Testis (tissue), 5 donors: ENCODE measurements at regions of chr7 and their contacts with region 1.

Region 1: DNA sequence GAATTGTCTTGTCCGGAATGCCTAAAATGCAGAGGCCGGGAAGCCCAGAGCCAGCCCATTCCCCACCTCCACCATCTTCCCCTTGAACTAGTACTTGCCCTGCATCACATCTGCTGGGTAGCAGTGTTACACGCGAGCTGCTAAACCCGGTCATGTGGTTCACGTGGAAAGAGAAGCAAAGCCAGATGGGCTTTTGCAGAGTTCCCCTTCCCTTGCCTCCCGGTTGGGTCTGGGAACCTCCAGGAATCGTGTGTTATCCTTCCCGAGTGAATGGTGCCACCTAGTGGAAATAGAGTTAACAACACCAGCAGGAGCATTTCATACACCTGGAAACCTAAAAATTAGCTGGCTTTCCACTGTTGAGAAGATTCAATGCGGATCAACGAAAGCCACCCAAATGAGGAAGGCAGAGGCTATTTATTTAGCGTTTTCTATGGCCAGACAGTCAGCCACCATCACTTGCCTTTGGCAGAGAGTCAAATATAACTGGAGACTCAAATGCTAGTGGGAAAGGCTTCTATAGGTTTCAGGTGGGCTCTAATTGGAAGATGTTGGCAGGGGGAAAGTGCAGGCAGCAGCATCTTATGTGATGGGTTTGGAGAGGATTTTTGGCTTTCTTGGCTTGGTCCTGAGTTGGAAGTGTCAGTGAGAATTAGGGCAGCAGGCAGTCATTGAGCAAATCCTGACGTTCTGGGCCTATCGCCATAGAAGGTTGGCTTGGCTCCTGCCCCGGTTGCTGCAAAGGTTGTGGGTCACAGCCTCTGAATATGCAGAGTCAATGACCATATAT is 12.9 kb upstream of the DENND2A start:
- DNase-seq: peak; percentile 78
- H3K4me3 ChIP-seq: peak overlapping the region in 1 of 2 donors; percentile 24
- H3K27ac ChIP-seq: no peak overlapping the region
- H3K4me1 ChIP-seq: peaks cover 8% of the 10 kb centered on the region
- H3K27me3 ChIP-seq: no peaks in the 10 kb centered on the region
- CTCF ChIP-seq: peak; percentile 77 to 92 (median 87)
- POLR2A ChIP-seq: no peak

Region 2: DNA sequence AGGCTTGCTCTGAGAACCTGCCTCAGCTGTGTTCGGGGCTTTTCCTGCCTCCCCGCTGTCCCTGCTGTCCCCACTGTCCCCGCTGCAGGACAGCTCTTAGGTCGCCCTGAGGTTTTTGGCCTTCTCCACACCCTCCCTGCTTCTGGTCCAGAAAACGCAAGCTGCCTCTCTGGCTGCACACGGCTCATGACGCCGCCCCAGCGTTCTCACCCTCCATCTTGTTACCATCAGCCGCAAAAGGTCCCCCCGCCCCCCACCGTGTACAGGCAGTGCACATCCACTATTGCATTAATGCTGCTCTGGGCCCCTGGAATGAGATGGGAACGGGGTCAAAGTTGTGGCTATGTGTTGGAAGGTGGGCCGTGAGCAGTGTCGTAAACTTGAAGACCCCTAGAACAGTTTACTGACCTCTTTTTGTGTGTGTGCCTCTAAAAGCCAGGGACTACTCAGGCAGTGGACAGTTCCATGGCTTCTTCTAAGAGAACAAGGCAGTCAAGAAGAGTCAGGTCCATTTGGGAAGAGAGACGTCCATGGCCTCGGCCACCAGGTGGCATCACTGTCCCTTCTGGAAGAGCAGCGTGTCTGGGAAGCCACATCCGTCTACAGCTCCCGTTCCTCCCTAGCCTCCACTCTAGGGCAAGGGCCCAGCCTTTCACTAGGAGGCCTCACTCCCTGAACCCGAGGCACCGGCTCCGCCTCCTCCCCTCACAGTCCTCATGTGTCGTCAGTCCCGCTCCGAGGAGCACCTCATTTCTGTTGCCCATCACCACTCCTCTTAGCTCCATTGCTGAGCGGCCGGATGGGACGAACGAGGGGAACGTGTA is 135.8 kb before region 1 on chr7:
- intact Hi-C with region 1: loop called (anchors 5 kb)
- DNase-seq: peak; percentile 95
- H3K4me3 ChIP-seq: peak overlapping the region in 1 of 2 donors; percentile 1
- H3K27ac ChIP-seq: peak overlapping the region; percentile 42 to 84
- H3K4me1 ChIP-seq: peaks cover 16% of the 10 kb centered on the region
- H3K27me3 ChIP-seq: no peaks in the 10 kb centered on the region
- CTCF ChIP-seq: peak; percentile 68 to 88 (median 84)
- POLR2A ChIP-seq: no peak